Heart left ventricle (tissue), 16 donors: ENCODE measurements at regions of chr1 and their contacts with region 1.

Region 1: DNA sequence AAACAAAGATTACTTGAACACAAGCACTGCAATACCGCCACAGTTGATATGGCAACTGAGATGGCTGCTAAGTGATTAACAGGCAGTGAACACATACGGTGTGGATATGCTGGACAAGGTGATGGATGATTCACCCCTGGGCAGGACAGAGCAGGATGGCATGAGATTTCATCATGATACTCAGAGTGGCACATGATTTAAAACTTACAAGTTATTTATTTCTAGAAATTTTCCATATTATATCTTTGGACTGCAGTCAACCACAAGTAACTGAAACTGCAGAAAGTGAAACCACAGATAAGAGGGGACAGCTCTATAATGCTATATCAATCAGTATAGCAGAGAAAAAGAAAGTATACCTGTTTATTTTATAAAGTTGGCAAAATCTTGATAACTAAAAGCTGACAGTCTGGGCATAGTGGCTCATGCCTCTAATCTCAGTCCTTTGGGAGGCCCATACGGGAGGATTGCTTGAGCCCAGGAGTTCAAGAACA is 47.9 kb downstream of the PHACTR4 start:
- DNase-seq: no peak
- ATAC-seq: no peak
- H3K4me3 ChIP-seq: peak overlapping the region in 1 of 12 donors; percentile 24
- H3K27ac ChIP-seq: no peak overlapping the region
- H3K4me1 ChIP-seq: peaks cover 0 to 33% (median 3%) of the 10 kb centered on the region in 12 donors
- H3K27me3 ChIP-seq: no peaks in the 10 kb centered on the region
- CTCF ChIP-seq: no peak
- POLR2A ChIP-seq: no peak

Region 2: GRCh38 chr1:28369371-28370238 is 47.9 kb before region 1 on chr1 and contains the start of gene PHACTR4:
- intact Hi-C with region 1: no loop called
- DNase-seq: peak; percentile 93 to 96 (median 96)
- ATAC-seq: peak; percentile 97 to 99 (median 98)
- H3K4me3 ChIP-seq: peak within 1 kb of the TSS; percentile 48 to 98 (median 81)
- H3K27ac ChIP-seq: peak within 1 kb of the TSS; percentile 59 to 99 (median 94)
- H3K4me1 ChIP-seq: peaks cover 0 to 35% (median 15%) of the 10 kb centered on the region in 12 donors
- H3K27me3 ChIP-seq: no peaks in the 10 kb centered on the region
- CTCF ChIP-seq: no peak
- POLR2A ChIP-seq: peak in 1 of 2 donors; percentile 89
- total RNA-seq, gene PHACTR4: 13.6 to 30.5 (median 19.0) TPM

Region 3: DNA sequence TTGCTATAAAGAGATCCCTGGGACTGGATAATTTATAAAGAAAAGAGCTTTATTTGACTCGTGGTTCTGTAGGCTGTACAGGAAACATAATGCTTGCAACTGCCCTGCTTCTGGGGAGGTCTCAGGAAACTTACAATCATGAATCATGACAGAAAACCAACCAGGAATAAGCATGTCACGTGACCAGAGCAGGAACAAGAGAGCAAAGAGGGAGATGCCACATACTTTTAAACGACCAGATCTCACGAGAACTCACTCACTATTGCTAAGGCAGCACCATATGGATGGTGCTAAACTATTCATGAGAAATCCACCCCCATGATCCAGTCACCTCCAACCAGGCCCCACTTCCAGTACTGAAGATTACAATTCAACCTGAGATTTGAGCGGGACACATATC is 38.6 kb after region 1 on chr1:
- intact Hi-C with region 1: loop called in 6 of 10 experiments (anchors 5 to 10 kb)
- DNase-seq: no peak
- ATAC-seq: peak in 2 of 4 donors; percentile 34 to 44
- H3K4me3 ChIP-seq: no peak overlapping the region
- H3K27ac ChIP-seq: peak overlapping the region in 10 of 12 donors; percentile 28 to 74 (median 62)
- H3K4me1 ChIP-seq: peaks cover 2 to 46% (median 34%) of the 10 kb centered on the region in 12 donors
- H3K27me3 ChIP-seq: no peaks in the 10 kb centered on the region
- CTCF ChIP-seq: no peak
- POLR2A ChIP-seq: no peak

Region 4: GRCh38 chr1:28744184-28744583 is 326.7 kb after region 1 on chr1:
- intact Hi-C with region 1: no loop called
- DNase-seq: no peak
- ATAC-seq: no peak
- H3K4me3 ChIP-seq: no peak overlapping the region
- H3K27ac ChIP-seq: no peak overlapping the region
- H3K4me1 ChIP-seq: peaks cover 5 to 84% (median 69%) of the 10 kb centered on the region in 12 donors
- H3K27me3 ChIP-seq: no peaks in the 10 kb centered on the region
- CTCF ChIP-seq: no peak
- POLR2A ChIP-seq: no peak